Gastrocnemius medialis (tissue), 4 donors: ENCODE measurements at regions of chr15 and their contacts with region 1.

Region 1: DNA sequence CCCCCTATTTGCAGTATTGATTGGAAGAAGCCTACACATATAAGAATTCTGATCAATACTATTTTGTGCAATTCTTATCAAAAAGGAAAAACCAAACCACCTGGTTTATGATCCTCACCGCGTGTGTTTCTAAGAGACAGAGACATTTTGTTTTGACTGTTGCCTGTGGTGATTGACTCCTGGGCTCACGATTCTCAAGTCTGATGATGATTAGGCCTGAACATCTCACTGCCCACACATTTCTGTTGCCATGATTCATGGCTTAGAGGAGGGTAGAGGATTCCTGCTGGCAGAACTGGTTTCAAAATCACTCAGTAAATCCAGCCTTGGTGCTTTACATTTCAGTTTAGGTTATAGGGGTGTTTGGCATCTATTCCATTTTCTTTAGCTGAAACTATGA is 88.3 kb upstream of the UBE3A start:
- DNase-seq: no peak
- ATAC-seq: no peak
- H3K4me3 ChIP-seq: no peak overlapping the region
- H3K27ac ChIP-seq: no peak overlapping the region
- H3K4me1 ChIP-seq: no peaks in the 10 kb centered on the region
- H3K27me3 ChIP-seq: no peaks in the 10 kb centered on the region
- CTCF ChIP-seq: no peak
- POLR2A ChIP-seq: no peak

Region 2: GRCh38 chr15:23897531-23897930 is 1629.6 kb before region 1 on chr15:
- in situ Hi-C with region 1: no loop called
- intact Hi-C with region 1: no loop called
- DNase-seq: no peak
- ATAC-seq: no peak
- H3K4me3 ChIP-seq: no peak overlapping the region
- H3K27ac ChIP-seq: no peak overlapping the region
- H3K4me1 ChIP-seq: no peaks in the 10 kb centered on the region
- H3K27me3 ChIP-seq: no peaks in the 10 kb centered on the region
- CTCF ChIP-seq: no peak
- POLR2A ChIP-seq: no peak

Region 3: DNA sequence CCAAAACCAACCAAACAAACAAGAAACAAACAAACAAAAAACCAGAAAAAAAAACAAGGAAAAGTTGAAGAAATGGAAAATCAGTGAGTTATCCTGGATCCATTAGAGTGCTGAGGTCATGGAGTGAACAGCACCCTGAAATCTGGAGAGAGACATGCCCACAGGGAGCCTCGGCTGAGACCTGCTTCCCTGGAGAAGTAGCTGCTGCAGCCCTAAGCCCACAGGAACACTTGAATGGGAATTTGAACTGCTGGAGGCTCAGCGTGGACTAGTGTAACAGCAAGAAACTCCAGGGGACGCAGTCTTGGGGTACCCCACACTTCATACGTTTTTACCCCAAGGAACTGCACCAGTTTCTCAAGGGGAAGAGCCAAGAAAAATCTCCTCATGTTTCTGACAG is 55.8 kb after region 1 on chr15:
- in situ Hi-C with region 1: loop called in 1 of 4 experiments (anchors 10 kb)
- intact Hi-C with region 1: no loop called
- DNase-seq: no peak
- ATAC-seq: no peak
- H3K4me3 ChIP-seq: no peak overlapping the region
- H3K27ac ChIP-seq: no peak overlapping the region
- H3K4me1 ChIP-seq: no peaks in the 10 kb centered on the region
- H3K27me3 ChIP-seq: no peaks in the 10 kb centered on the region
- CTCF ChIP-seq: no peak
- POLR2A ChIP-seq: no peak